ENCODE measurements at regions of chr5 and their contacts with region 1.

Region 1: DNA sequence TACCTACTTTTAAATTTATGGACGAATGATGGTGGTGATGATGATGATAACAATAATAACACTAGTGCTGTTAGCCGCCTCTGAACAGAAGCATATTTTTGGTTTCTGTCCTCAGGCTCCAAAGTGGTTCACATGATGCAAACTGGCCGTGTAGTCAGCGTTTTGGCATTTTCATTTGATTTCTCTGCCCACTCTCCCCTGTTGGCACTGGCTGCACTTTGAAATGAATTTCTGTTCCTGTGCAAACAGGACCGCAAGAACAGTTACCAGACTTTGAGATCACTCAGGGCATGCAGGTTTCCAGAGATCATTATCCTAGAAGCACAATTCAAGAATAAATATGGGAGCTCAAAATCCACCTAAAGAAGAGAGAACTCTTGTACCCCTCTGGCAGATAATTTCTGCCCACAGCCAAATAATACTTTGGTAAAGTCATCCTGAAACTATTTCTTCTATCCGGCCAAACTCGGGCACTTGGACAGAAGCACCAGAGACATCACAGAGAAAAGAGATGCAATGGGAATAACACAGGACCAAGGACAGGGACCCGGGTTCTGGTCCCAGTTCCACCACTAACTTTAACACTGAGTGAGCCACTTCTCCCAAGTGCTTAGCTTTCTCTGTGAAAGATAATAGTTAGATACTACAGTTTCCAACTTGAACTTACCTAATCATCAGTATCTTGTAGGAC is 201.7 kb upstream of the PTGER4 start:
- DNase-seq: no peak
- ATAC-seq: no peak
- H3K4me3 ChIP-seq: no peak overlapping the region
- H3K27ac ChIP-seq: no peak overlapping the region
- H3K4me1 ChIP-seq: no peaks in the 10 kb centered on the region
- H3K27me3 ChIP-seq: no peaks in the 10 kb centered on the region
- CTCF ChIP-seq: no peak
- EP300 ChIP-seq: no peak
- POLR2A ChIP-seq: no peak
- RAD21 ChIP-seq: no peak

Region 2: DNA sequence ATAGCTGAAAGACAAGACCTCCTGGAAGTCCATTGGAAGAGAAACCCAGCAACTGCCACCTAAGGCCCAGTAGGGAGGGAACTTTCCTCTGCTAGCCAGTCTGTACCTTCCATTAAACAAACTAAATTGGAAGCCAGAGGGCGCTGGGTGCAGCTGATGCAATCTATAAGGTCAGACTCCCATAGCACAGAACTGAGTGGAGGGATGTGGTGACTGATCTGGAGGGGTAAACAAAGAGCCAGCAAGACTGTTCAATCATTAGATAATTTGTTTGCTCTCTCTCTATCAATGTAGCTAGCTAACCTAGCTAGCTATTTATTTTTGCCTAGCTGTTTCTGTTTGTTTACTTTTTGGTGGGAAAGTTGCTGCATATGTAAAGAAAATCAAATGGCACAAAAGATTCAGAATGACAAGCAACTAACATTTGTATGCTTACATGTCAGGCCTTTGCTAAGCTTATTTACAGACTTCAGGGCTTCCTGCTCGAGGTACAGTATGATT is 761.4 kb before region 1 on chr5:
- CTCF ChIA-PET with region 1: no interaction called
- POLR2A ChIA-PET with region 1: no interaction called
- RAD21 ChIA-PET with region 1: no interaction called
- SMC1A ChIA-PET with region 1: no interaction called
- in situ Hi-C with region 1: no loop called
- intact Hi-C with region 1: no loop called
- DNase-seq: no peak
- ATAC-seq: peak; percentile 86
- H3K4me3 ChIP-seq: no peak overlapping the region
- H3K27ac ChIP-seq: no peak overlapping the region
- H3K4me1 ChIP-seq: no peaks in the 10 kb centered on the region
- H3K27me3 ChIP-seq: no peaks in the 10 kb centered on the region
- CTCF ChIP-seq: peak; percentile 34 to 46 (median 37); a peak in 4 of 6 replicates
- EP300 ChIP-seq: no peak
- POLR2A ChIP-seq: no peak
- RAD21 ChIP-seq: peak; percentile 71

Region 3: GRCh38 chr5:40464511-40464910 is 13.5 kb before region 1 on chr5:
- CTCF ChIA-PET with region 1: interaction called, 6 read pairs
- POLR2A ChIA-PET with region 1: no interaction called
- RAD21 ChIA-PET with region 1: no interaction called
- SMC1A ChIA-PET with region 1: interaction called, 23 read pairs
- in situ Hi-C with region 1: no loop called
- intact Hi-C with region 1: no loop called
- DNase-seq: no peak
- ATAC-seq: no peak
- H3K4me3 ChIP-seq: no peak overlapping the region
- H3K27ac ChIP-seq: no peak overlapping the region
- H3K4me1 ChIP-seq: no peaks in the 10 kb centered on the region
- H3K27me3 ChIP-seq: no peaks in the 10 kb centered on the region
- CTCF ChIP-seq: no peak
- EP300 ChIP-seq: no peak
- POLR2A ChIP-seq: no peak
- RAD21 ChIP-seq: no peak

Region 4: DNA sequence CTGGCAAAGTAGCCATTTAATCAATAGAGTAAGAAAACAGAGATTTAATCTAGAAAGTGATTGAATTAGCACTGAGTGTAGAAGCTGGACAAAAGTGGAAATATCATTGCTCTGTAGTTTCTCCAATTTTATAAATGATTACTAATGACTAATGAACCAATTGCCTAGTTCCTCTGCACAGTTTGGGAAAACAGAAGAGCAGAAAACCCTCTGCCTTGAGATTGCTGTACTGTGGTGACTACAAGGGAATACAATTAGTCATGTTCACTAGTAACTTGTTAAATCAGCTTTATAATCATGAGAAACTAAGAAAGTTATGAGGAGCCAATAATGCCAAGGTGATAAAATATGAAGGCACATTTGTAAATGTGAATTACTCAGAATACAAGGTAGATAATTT is 756.5 kb after region 1 on chr5:
- CTCF ChIA-PET with region 1: no interaction called
- POLR2A ChIA-PET with region 1: no interaction called
- RAD21 ChIA-PET with region 1: no interaction called
- SMC1A ChIA-PET with region 1: no interaction called
- in situ Hi-C with region 1: no loop called
- intact Hi-C with region 1: no loop called
- DNase-seq: no peak
- ATAC-seq: no peak
- H3K4me3 ChIP-seq: no peak overlapping the region
- H3K27ac ChIP-seq: no peak overlapping the region
- H3K4me1 ChIP-seq: no peaks in the 10 kb centered on the region
- H3K27me3 ChIP-seq: no peaks in the 10 kb centered on the region
- CTCF ChIP-seq: no peak
- EP300 ChIP-seq: no peak
- POLR2A ChIP-seq: no peak
- RAD21 ChIP-seq: no peak